HEK293 (cell line): ENCODE measurements at regions of chr6 and their contacts with region 1.

Region 1: GRCh38 chr6:116217069-116217468 is 36.8 kb downstream of the TSPYL4 start:
- H3K4me3 ChIP-seq: no peak overlapping the region
- H3K27ac ChIP-seq: no peak overlapping the region
- H3K4me1 ChIP-seq: no peaks in the 10 kb centered on the region
- CTCF ChIP-seq: peak; percentile 14; the same call in 1 of the 2 replicates

Region 2: DNA sequence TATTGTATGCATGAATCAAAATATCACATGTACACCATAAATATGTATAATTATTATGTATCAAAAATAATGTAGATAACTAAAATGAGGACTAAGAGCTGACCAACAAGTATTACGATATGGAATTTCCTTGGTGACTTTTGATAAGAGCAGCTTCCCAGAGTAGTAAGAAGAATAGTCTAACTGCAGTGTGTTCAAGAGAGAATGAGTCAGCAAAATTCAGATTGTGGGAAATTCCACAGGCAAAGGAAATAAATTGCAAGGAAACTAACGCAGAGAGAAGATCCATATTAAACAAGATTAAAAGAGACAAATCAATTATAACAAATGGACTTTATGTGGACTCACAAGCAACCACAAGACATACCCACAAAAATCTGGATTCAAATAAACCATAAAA is 182.7 kb before region 1 on chr6:
- CTCF ChIA-PET with region 1: no interaction called
- POLR2A ChIA-PET with region 1: no interaction called
- H3K4me3 ChIP-seq: no peak overlapping the region
- H3K27ac ChIP-seq: no peak overlapping the region
- H3K4me1 ChIP-seq: no peaks in the 10 kb centered on the region
- CTCF ChIP-seq: no peak

Region 3: DNA sequence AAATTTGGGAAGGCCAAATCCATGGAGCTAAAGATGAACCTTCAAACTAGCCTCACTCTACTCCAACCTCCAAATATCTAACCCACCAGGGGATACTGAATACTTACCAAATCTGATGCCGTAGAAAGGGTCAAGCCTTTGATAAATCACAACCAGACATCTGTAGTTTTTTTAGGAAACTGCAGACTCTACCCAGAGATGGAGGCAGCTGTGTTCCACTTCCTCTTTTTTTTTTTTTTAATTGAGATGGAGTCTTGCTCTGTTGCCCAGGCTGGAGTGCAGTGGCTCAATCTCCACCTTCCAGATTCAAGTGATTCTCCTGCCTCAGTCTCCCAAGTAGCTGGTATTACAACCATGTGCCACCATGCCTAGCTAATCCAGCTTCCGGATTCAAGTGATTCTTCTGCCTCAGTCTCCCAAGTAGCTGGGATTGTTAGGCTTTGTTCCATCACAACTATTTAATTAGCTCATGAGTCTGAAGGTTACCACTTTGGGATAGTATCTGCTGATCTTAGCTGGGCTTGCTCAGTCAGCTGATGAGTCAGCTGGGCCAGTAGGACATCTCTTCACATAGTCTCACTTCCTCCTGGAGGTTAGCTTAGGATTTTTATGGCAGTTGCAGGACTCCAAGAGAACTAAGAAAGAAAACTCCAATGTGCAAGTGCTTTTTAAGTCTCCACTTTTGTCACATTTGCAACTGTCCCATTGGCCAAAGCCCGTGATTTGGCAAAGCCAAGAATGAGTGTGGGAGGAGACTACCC is 169.7 kb before region 1 on chr6:
- CTCF ChIA-PET with region 1: no interaction called
- POLR2A ChIA-PET with region 1: no interaction called
- H3K4me3 ChIP-seq: no peak overlapping the region
- H3K27ac ChIP-seq: no peak overlapping the region
- H3K4me1 ChIP-seq: no peaks in the 10 kb centered on the region
- CTCF ChIP-seq: no peak

Region 4: GRCh38 chr6:116111552-116112528 is 105.2 kb before region 1 on chr6:
- CTCF ChIA-PET with region 1: interaction called, 13 read pairs
- POLR2A ChIA-PET with region 1: no interaction called
- H3K4me3 ChIP-seq: no peak overlapping the region
- H3K27ac ChIP-seq: no peak overlapping the region
- H3K4me1 ChIP-seq: no peaks in the 10 kb centered on the region
- CTCF ChIP-seq: 0 out of 2 replicates have a peak, but pooled peaks have one; percentile 25

Region 5: GRCh38 chr6:116200619-116201249 is 16.3 kb before region 1 on chr6:
- CTCF ChIA-PET with region 1: interaction called, 57 read pairs
- POLR2A ChIA-PET with region 1: no interaction called
- H3K4me3 ChIP-seq: no peak overlapping the region
- H3K27ac ChIP-seq: no peak overlapping the region
- H3K4me1 ChIP-seq: peaks cover 3% of the 10 kb centered on the region; the same call in 1 of the 2 replicates
- CTCF ChIP-seq: no peak

Region 6: DNA sequence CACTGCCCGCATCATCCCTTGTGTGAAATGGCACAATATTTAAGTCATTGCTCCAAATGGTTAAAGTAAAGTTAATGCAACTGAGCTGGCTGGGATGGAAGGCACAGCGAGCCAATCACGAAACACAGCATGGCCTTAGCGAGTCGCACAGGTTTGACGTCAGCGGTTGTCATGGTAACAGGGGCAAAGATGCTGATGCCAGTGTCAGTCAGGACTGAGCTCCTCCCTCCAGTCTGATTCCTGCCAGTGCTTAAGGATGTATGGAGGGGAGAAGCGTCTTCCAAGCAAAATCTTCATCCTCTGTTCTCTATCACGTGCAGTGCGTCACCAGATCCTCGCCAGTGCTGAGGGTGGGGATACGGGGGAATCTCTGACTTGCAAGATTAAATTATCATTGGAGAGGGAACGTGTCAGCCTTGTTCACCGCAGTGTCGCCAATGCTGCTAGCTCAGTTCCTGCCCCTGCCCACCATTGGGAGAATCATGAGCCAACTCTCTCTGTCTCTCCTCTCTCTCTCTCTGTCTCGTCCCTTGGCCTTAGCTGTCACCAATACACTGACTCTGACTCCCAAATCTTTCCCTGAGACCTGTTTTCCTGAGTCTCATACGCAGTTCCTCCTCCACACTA is 12.3 kb after region 1 on chr6:
- CTCF ChIA-PET with region 1: interaction called, 60 read pairs
- POLR2A ChIA-PET with region 1: interaction called, 12 read pairs
- H3K4me3 ChIP-seq: no peak overlapping the region
- H3K27ac ChIP-seq: no peak overlapping the region
- H3K4me1 ChIP-seq: no peaks in the 10 kb centered on the region
- CTCF ChIP-seq: no peak

Region 7: DNA sequence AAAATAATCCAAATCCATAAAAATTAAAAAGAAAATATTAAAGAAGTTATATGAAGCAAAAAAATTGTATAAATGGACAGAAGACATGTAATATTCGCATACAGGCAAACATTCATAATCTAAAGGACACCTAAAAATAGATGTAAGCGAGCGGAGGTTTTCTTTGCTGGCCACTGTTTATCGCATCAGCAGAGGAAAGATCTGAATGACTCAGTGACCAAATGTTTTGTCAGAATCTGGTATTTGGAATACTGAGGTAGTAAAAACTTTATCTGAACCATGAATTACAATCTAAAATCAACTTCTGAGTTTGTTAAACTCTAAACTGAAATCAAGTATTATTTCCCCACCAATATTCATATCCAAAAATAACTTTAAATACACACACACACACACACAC is 29.0 kb after region 1 on chr6:
- CTCF ChIA-PET with region 1: interaction called, 26 read pairs
- POLR2A ChIA-PET with region 1: no interaction called
- H3K4me3 ChIP-seq: no peak overlapping the region
- H3K27ac ChIP-seq: no peak overlapping the region
- H3K4me1 ChIP-seq: peaks cover 24% of the 10 kb centered on the region; the same call in 1 of the 2 replicates
- CTCF ChIP-seq: no peak

Region 8: GRCh38 chr6:116268589-116269293 is 51.7 kb after region 1 on chr6:
- CTCF ChIA-PET with region 1: interaction called, 42 read pairs
- POLR2A ChIA-PET with region 1: no interaction called
- H3K4me3 ChIP-seq: no peak overlapping the region
- H3K27ac ChIP-seq: no peak overlapping the region
- H3K4me1 ChIP-seq: no peaks in the 10 kb centered on the region
- CTCF ChIP-seq: peak; percentile 76

Region 9: DNA sequence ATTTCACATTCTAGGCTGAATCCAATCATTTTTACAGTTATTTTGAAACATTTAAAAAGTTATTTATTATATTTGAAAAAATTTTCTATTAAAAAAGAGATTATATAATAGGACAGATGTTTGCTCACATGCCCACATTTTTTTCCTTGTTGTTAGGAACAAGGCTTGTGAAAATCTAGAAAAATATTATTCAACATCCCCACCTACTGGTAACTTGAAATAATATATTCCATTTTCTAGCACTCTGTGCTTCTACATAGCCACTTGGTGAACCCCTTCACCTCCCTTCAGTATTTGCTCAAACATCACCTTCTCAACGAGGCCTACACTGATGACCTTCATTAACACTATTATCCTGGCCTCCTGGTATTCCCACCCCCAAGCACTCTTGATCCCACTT is 630.2 kb after region 1 on chr6:
- CTCF ChIA-PET with region 1: interaction called, 11 read pairs
- POLR2A ChIA-PET with region 1: no interaction called
- H3K4me3 ChIP-seq: no peak overlapping the region
- H3K27ac ChIP-seq: no peak overlapping the region
- H3K4me1 ChIP-seq: no peaks in the 10 kb centered on the region
- CTCF ChIP-seq: 0 out of 2 replicates have a peak, but pooled peaks have one; percentile 24